ENCODE measurements at regions of chr7 and their contacts with region 1.

Region 1: DNA sequence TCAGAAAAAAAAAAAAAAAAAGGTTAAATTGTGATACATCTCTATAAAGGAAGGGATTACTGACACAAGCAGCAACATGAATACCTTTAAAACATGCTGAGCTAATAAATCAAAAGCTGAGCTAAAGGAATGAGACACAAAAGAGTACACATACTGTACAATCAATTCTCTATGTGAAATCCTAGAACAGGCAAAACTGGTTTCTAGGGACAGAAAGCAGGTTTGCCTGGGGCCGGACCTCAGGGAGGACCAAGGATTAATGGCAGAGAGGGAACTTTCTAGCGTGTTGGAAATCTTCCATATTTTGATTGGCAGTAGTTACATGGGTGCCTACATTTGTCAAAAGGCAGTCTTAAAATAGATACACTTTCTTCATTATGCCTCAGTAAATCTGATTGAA is 52.5 kb downstream of the KLRG2 start:
- DNase-seq: no peak
- H3K4me3 ChIP-seq: no peak overlapping the region
- H3K27ac ChIP-seq: no peak overlapping the region
- H3K27me3 ChIP-seq: no peaks in the 10 kb centered on the region
- CTCF ChIP-seq: no peak

Region 2: DNA sequence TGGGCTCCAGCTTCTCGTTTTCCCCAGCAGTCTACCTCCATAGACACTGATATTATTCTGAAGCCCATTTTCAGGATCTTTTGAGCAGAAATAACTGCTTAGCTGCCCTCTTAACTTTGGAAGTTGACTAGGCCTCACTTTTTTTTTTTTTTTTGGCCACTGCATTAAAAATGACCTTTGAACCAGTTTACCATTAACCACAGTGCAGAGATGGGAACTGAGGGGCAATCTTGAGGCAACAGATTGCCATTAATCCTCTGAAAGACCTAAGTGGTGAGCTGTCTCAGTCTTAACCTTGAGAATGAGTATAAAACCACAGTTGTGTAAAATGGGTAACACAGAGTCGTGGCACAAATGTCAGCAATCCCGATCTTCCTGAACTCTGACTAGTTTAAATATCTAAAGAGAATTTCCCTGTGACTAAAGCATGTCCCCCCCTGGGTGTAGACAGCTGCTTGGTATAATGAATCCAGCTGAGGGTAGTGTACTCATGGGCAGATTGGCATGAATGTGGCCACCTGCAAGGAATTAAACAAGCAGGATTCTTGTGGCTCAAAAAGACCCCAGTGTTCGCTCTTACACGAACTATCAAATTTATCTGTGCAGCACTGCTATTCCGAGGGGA is 135.9 kb before region 1 on chr7:
- CTCF ChIA-PET with region 1: no interaction called
- POLR2A ChIA-PET with region 1: no interaction called
- DNase-seq: no peak
- H3K4me3 ChIP-seq: no peak overlapping the region
- H3K27ac ChIP-seq: no peak overlapping the region
- H3K27me3 ChIP-seq: no peaks in the 10 kb centered on the region
- CTCF ChIP-seq: no peak

Region 3: GRCh38 chr7:139355320-139355719 is 75.7 kb before region 1 on chr7:
- CTCF ChIA-PET with region 1: no interaction called
- POLR2A ChIA-PET with region 1: no interaction called
- DNase-seq: no peak
- H3K4me3 ChIP-seq: no peak overlapping the region
- H3K27ac ChIP-seq: no peak overlapping the region
- H3K27me3 ChIP-seq: no peaks in the 10 kb centered on the region
- CTCF ChIP-seq: no peak

Region 4: DNA sequence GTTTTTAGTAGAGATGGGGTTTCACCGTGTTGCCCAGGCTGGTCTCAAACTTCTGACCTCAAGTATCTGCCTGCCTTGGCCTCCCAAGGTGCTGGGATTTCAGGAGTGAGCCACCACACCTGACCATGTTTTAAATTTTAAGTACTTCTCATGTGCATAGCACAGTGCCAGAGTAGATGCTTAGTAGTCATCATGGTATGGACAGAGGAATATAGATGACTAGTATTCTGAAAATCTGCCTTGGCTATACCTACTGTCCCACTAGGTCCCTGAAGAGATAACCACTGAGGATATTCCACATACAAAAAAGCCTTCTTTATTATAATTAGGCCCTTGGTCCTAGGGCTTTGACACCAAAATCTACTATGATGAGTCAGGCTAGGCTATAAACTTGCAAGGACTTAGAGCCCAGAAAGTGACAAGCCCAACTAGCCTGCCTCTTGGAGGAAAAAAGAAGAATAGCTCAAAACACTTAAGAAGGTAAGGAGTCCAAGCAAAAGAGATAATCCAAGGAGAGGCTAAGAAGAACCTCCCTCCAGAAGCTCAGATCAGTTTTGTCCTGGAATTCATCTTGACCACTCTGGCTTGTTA is 37.3 kb before region 1 on chr7:
- CTCF ChIA-PET with region 1: interaction called, 21 read pairs
- POLR2A ChIA-PET with region 1: no interaction called
- DNase-seq: no peak
- H3K4me3 ChIP-seq: no peak overlapping the region
- H3K27ac ChIP-seq: no peak overlapping the region
- H3K27me3 ChIP-seq: no peaks in the 10 kb centered on the region
- CTCF ChIP-seq: no peak

Region 5: GRCh38 chr7:139446036-139446881 is 15.2 kb after region 1 on chr7:
- CTCF ChIA-PET with region 1: interaction called, 43 read pairs
- POLR2A ChIA-PET with region 1: no interaction called
- DNase-seq: no peak
- H3K4me3 ChIP-seq: no peak overlapping the region
- H3K27ac ChIP-seq: no peak overlapping the region
- H3K27me3 ChIP-seq: no peaks in the 10 kb centered on the region
- CTCF ChIP-seq: no peak

Region 6: DNA sequence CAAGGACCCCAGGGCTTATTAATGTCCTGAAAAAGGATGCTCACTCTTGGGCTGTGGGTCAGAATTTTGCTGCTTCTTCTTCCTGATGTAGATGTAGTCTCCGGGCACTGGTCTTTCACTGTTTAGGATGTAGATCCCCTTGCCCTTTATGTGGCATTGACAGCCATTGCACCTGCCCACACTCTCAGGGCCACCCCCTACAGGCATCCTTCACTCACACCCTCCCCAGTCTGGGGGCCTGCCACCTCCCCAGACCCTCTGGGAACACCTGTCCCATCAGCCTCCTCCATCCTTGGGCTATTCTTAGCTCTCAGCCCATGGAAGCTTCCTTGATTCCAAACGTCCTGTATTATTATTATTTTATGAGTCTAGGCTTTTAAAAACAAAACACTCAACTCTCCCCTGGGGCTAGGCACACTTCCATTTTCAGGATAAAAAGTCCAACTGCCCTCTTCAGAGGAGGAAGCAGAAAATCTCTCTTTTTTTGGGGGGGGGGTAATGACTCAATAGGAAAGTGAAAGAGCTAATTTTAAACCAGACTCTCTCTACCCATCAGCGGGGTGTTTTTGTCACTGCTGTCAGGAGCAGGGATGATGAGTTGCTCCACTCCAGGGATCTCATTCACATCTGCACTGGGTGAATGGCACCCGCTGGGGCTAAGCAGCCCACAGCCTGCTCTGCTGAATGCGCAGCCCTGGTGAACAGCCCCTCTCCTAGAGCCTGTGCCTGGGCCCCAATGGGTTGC is 64.0 kb after region 1 on chr7:
- CTCF ChIA-PET with region 1: interaction called, 17 read pairs
- POLR2A ChIA-PET with region 1: no interaction called
- DNase-seq: no peak
- H3K4me3 ChIP-seq: no peak overlapping the region
- H3K27ac ChIP-seq: no peak overlapping the region
- H3K27me3 ChIP-seq: peaks cover 35% of the 10 kb centered on the region
- CTCF ChIP-seq: no peak